Heart left ventricle (tissue), 16 donors: ENCODE measurements at regions of chr10 and their contacts with region 1.

Region 1: GRCh38 chr10:29646238-29646902 is 11.6 kb upstream of the SVIL start:
- DNase-seq: no peak
- ATAC-seq: peak in 2 of 4 donors; percentile 2 to 11
- H3K4me3 ChIP-seq: peak overlapping the region in 1 of 12 donors; percentile 5
- H3K27ac ChIP-seq: peak overlapping the region; percentile 19 to 86 (median 52)
- H3K4me1 ChIP-seq: peaks cover 0 to 73% (median 43%) of the 10 kb centered on the region in 12 donors
- H3K27me3 ChIP-seq: no peaks in the 10 kb centered on the region
- CTCF ChIP-seq: no peak
- POLR2A ChIP-seq: no peak

Region 2: GRCh38 chr10:29725133-29725720 is 78.9 kb after region 1 on chr10:
- intact Hi-C with region 1: loop called in 2 of 10 experiments (anchors 2 to 5 kb)
- DNase-seq: peak in 4 of 5 donors; percentile 42 to 73 (median 57)
- ATAC-seq: peak; percentile 88 to 97 (median 93)
- H3K4me3 ChIP-seq: peak overlapping the region in 2 of 12 donors; percentile 7 to 19
- H3K27ac ChIP-seq: peak overlapping the region in 11 of 12 donors; percentile 28 to 98 (median 62)
- H3K4me1 ChIP-seq: peaks cover 0 to 49% (median 28%) of the 10 kb centered on the region in 12 donors
- H3K27me3 ChIP-seq: no peaks in the 10 kb centered on the region
- CTCF ChIP-seq: no peak
- POLR2A ChIP-seq: no peak